ENCODE measurements at regions of chr16 and their contacts with region 1.

Region 1: GRCh38 chr16:10918294-10919002 is 23.8 kb downstream of the DEXI start:
- DNase-seq: peak; percentile 97
- H3K4me3 ChIP-seq: peak overlapping the region in 1 of 4 donors; percentile 26
- H3K27ac ChIP-seq: peak overlapping the region; percentile 3 to 44 (median 22)
- H3K4me1 ChIP-seq: peaks cover 0 to 39% (median 28%) of the 10 kb centered on the region in 4 donors
- H3K27me3 ChIP-seq: no peaks in the 10 kb centered on the region
- CTCF ChIP-seq: peak; percentile 81 to 96 (median 95)
- EP300 ChIP-seq: no peak
- POLR2A ChIP-seq: no peak

Region 2: GRCh38 chr16:10188236-10188635 is 730.2 kb before region 1 on chr16:
- intact Hi-C with region 1: no loop called
- DNase-seq: no peak
- H3K4me3 ChIP-seq: no peak overlapping the region
- H3K27ac ChIP-seq: no peak overlapping the region
- H3K4me1 ChIP-seq: peaks cover 0 to under 1% (median under 1%) of the 10 kb centered on the region in 4 donors
- H3K27me3 ChIP-seq: peaks cover 0 to 27% (median 0%) of the 10 kb centered on the region in 3 donors
- CTCF ChIP-seq: no peak
- EP300 ChIP-seq: no peak
- POLR2A ChIP-seq: no peak

Region 3: DNA sequence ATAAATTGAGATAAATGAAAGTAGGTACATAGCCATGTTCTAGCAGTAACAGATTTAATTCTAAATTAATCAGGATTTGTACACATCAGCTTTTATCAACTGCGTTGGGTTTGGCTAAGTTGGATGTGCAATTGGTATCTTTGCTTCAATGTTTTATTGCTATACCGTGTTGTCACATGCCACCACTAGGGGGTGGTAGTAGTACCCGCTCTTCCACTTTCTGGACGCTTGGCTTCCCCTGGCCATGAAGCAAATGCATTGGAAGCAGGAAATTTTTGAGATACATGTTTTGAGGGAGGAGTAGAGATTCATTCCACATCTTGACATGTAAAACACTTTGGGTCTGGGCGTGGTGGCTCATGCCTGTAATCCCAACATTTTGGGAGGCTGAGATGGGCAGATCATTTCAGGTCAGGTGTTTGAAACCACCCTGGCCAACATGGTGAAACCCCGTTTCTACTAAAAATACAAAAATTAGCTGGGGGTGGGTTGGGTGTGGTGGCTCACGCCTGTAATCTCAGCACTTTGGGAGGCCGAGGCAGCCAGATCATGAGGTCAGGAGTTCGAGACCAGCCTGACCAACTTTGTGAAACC is 396.7 kb before region 1 on chr16:
- intact Hi-C with region 1: loop called (anchors 5 kb)
- DNase-seq: peak; percentile 76
- H3K4me3 ChIP-seq: no peak overlapping the region
- H3K27ac ChIP-seq: no peak overlapping the region
- H3K4me1 ChIP-seq: no peaks in the 10 kb centered on the region
- H3K27me3 ChIP-seq: no peaks in the 10 kb centered on the region
- CTCF ChIP-seq: peak; percentile 76 to 85 (median 78)
- EP300 ChIP-seq: no peak
- POLR2A ChIP-seq: no peak

Region 4: DNA sequence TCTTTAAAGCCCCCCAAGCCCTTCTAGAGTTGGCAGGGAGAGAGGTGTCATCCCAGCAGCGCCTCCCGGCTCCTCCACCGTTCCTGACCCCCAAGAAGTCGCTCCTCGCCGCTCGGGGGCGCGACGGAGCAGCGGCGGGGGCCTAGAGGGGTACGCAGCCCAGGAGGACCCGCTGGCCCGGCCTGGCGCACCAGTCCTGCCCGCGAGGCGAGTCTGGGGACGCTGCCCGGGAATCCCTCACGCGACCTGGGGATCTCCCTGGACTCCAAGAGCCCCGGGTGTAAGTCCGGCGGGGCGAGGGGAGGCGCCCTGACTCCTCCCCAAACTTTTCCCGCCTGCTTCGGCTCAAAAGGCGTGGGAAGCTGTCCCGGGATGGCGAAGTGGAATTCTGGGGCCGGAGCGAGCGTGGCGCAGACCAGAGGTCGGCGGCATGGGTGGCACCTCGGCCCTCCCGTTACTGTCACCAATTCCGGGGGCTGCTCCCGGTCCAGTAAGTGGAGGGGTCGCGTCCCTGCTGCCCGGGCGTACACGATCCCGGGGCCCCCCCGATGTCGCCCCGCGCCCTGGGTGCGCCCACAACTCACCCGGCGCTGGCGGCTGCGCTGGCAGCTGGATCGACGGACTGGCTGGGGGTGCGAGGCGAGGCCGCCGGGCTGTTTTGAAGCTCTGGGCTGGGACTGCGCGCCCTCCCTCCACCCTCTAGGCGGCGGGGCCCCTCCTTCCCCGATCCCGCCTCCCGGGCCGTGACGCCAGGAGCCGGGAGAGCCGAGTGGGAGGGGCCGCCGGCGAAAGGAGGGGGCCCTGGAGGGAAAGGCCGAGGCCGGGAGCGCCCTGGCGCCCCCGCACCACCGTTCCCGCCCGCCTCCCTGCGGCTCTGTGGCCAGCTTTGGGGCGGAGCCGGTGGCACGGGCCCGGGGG is 338.2 kb before region 1 on chr16 and contains the start of gene EMP2:
- intact Hi-C with region 1: loop called (anchors 2 kb)
- DNase-seq: peak; percentile 93
- H3K4me3 ChIP-seq: peak within 1 kb of the TSS; percentile 95 to 99 (median 98)
- H3K27ac ChIP-seq: peak within 1 kb of the TSS; percentile 98 to 99 (median 98)
- H3K4me1 ChIP-seq: peaks cover 0 to 56% (median 53%) of the 10 kb centered on the region in 4 donors
- H3K27me3 ChIP-seq: no peaks in the 10 kb centered on the region
- CTCF ChIP-seq: peak; percentile 37 to 60 (median 56)
- EP300 ChIP-seq: no peak
- POLR2A ChIP-seq: peak; percentile 37 to 75
- total RNA-seq, gene EMP2: 38.3 to 57.3 (median 42.8) TPM

Region 5: GRCh38 chr16:10708969-10709368 is 209.5 kb before region 1 on chr16:
- intact Hi-C with region 1: no loop called
- DNase-seq: no peak
- H3K4me3 ChIP-seq: no peak overlapping the region
- H3K27ac ChIP-seq: no peak overlapping the region
- H3K4me1 ChIP-seq: no peaks in the 10 kb centered on the region
- H3K27me3 ChIP-seq: peaks cover 0 to 3% (median 0%) of the 10 kb centered on the region in 3 donors
- CTCF ChIP-seq: no peak
- EP300 ChIP-seq: no peak
- POLR2A ChIP-seq: no peak

Region 6: GRCh38 chr16:10828851-10829731 is 89.4 kb before region 1 on chr16:
- intact Hi-C with region 1: loop called (anchors 2 kb)
- DNase-seq: peak; percentile 96
- H3K4me3 ChIP-seq: peak overlapping the region in 3 of 4 donors; percentile 12 to 18 (median 16)
- H3K27ac ChIP-seq: peak overlapping the region; percentile 80 to 92 (median 92)
- H3K4me1 ChIP-seq: peaks cover 3 to 32% (median 30%) of the 10 kb centered on the region in 4 donors
- H3K27me3 ChIP-seq: no peaks in the 10 kb centered on the region
- CTCF ChIP-seq: no peak
- EP300 ChIP-seq: peak in 2 of 4 donors; percentile 60 to 76
- POLR2A ChIP-seq: no peak